ENCODE measurements at regions of chr1 and their contacts with region 1.

Region 1: GRCh38 chr1:23449958-23450357 is 25.4 kb upstream of the TCEA3 start:
- DNase-seq: peak; percentile 84 to 89
- ATAC-seq: peak; percentile 75
- H3K4me3 ChIP-seq: no peak overlapping the region
- H3K27ac ChIP-seq: peak overlapping the region; percentile 15 to 78 (median 64)
- H3K4me1 ChIP-seq: peaks cover 42 to 44% of the 10 kb centered on the region in 2 donors
- H3K27me3 ChIP-seq: no peaks in the 10 kb centered on the region
- CTCF ChIP-seq: no peak
- POLR2A ChIP-seq: no peak

Region 2: DNA sequence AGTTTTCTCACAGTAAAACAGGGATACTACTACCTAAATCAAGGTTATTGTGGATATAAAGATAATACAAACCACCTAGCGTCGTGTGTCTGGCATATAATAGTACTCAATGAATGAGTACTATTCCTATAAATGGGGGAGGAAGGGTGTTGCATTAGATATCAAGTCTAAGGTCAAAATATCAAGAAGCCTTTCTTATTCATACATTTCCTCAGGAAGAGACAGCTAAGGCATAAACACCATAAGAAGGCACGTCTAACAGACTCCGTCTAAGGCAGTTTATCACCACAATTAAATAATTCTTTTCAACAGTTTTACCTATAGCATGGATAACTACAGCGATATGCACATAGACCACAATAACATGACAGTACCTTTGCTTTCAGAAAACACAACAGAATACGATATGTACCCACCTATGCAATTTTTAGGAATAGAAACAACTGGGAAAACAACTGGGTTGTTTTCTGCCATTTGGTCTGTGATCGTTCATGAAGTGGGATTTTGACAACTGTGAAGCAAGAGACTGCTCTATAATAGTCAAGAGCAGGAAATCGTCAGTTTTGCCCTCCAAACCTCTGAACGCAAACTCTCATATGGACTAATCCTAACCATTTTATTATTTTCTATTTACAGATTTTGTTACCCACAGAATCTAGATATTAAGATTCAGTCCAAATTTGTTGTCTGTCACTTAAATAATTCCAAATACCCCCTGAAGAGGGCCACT is 159.0 kb before region 1 on chr1:
- in situ Hi-C with region 1: no loop called
- intact Hi-C with region 1: no loop called
- DNase-seq: no peak
- ATAC-seq: no peak
- H3K4me3 ChIP-seq: no peak overlapping the region
- H3K27ac ChIP-seq: no peak overlapping the region
- H3K4me1 ChIP-seq: peaks cover 9 to 14% of the 10 kb centered on the region in 2 donors
- H3K27me3 ChIP-seq: no peaks in the 10 kb centered on the region
- CTCF ChIP-seq: no peak
- POLR2A ChIP-seq: no peak

Region 3: DNA sequence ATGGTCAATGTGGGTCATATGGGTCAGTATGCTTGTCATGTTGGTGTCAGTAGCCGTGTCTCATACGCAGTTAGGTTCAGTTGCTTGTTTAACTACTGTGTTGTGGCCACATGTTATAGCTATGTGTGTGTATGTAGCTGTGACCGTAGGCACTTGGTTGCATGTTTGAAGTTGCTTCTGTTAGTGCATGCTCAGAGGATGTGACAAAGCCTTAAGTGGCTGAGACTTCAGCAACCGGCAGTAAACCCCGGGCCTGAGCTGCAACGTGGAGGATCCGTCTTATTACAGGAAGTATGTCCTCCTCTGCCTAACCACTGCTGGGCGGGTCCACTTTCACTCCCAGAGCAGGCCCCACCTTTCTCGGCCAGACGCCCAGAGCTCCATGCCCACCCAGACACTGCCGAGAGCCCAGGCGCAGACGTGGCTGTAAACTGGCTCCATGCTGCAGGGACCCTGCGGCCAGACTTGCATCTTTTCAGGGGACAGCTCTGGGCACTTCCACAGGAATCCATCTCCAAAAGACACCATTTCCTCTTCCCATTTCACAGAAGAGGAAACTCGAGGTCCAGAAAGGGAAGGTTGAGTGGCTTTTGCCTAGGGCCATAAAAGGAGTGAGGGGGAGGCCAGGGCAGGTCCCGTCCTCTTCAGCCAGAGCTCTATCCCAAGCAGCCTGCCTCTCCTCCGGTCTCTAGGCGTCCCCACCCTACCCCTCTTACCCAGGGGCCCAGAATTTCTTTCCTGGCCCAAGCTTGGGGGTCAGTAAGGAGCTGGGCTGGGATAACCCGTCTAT is 27.5 kb before region 1 on chr1:
- in situ Hi-C with region 1: no loop called
- intact Hi-C with region 1: loop called (anchors 2 kb)
- DNase-seq: peak; percentile 33 to 65
- ATAC-seq: no peak
- H3K4me3 ChIP-seq: peak overlapping the region in 2 of 4 donors; percentile 68 to 72
- H3K27ac ChIP-seq: peak overlapping the region; percentile 93 to 96 (median 94)
- H3K4me1 ChIP-seq: peaks cover 66 to 79% of the 10 kb centered on the region in 2 donors
- H3K27me3 ChIP-seq: no peaks in the 10 kb centered on the region
- CTCF ChIP-seq: no peak
- POLR2A ChIP-seq: no peak

Region 4: DNA sequence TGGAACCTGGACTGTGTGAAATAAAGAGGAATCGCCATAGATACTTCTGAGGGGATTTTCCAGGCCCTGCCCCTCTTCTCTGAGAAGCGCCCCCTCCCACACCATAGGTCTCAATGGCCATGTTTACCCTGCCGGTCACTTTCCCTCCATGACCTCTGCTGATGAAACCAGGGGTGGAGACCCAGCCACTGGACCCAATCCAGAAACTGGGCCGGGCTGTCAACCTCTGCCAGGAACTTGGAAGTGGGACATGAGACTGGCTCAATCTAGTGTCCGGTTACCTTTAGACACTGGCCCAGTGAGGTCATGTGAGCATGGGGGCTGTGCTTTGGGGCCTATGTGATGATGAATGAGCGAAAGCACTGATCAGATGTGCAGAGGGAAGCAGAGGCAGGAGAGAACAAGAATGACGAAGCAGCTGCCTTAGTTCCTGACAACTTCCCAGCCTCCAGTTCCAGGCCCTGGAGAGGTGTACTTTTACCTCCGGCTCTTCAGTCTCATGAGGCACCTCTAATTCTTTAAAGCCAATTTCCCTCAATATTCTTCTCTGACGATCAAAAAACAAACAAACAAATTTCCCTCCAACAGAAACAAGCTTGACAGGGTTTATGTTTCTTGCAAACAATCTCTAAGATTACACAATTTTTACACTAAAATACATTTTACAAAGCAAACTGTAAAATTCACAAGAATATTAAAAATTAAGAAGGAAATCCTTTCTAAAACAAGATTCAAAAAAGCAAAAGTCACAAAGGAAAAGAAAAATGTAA is 29.1 kb after region 1 on chr1:
- in situ Hi-C with region 1: no loop called
- intact Hi-C with region 1: loop called (anchors 1 kb)
- DNase-seq: peak; percentile 95 to 99
- ATAC-seq: peak; percentile 90 to 92
- H3K4me3 ChIP-seq: peak overlapping the region in 1 of 4 donors; percentile 14
- H3K27ac ChIP-seq: peak overlapping the region; percentile 88 to 97 (median 93)
- H3K4me1 ChIP-seq: peaks cover 66 to 78% of the 10 kb centered on the region in 2 donors
- H3K27me3 ChIP-seq: no peaks in the 10 kb centered on the region
- CTCF ChIP-seq: no peak
- POLR2A ChIP-seq: peak; percentile 79 to 85

Measured in gastrocnemius medialis (tissue), 4 donors.